ENCODE measurements at regions of chr1 and their contacts with region 1.

Region 1: DNA sequence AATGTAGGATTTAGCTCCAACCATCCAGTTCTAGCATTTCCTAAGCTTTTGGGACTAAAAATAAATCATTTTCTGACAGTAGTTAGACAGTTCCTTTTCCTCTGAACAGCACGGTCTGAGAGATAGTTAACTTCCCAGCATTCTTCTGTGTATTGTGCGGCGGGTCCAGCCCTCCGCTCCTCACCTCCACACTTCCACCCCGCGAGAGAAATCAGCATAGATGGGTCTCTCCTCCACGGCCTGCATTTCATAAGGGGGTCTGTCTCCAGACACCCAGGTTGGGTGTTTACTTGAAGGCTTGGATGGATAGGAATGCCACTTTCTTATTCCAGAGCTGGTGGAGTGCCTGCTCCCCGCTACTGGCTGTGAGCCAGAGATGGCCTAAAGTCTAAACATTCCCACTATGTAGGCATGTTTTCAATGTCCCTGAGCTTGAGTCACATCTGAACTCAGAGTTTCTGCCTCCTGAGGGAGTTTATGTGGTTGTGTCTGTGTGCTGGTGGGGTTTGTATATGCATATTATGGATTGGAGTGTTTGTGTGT is 38.0 kb upstream of the PPP2R5A start:
- DNase-seq: no peak
- H3K4me3 ChIP-seq: no peak overlapping the region
- H3K27ac ChIP-seq: no peak overlapping the region
- H3K4me1 ChIP-seq: peaks cover 0 to 8% (median 6%) of the 10 kb centered on the region in 4 donors
- H3K27me3 ChIP-seq: no peaks in the 10 kb centered on the region
- CTCF ChIP-seq: no peak
- EP300 ChIP-seq: no peak
- POLR2A ChIP-seq: no peak

Region 2: DNA sequence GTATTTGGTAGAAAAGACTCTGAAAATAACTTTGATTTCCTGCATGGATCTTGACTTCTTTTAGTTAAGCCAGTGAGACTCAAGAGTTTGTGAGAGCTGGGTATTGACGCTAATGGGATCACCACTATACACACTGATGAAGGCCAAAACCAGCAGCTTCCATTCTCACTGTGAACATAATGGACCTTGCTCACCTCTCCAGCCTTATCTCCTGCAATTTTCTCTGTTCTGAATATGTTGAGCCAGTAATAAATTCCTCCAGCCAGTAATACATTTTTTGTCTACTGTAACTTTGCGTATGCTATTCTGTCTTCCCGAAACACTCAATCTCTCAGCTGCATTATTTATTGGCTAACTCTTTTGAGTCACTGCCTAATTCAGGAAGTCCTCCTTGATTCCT is 73.7 kb before region 1 on chr1:
- in situ Hi-C with region 1: no loop called
- intact Hi-C with region 1: loop called (anchors 2 kb)
- DNase-seq: no peak
- H3K4me3 ChIP-seq: no peak overlapping the region
- H3K27ac ChIP-seq: no peak overlapping the region
- H3K4me1 ChIP-seq: no peaks in the 10 kb centered on the region
- H3K27me3 ChIP-seq: no peaks in the 10 kb centered on the region
- CTCF ChIP-seq: no peak
- EP300 ChIP-seq: no peak
- POLR2A ChIP-seq: no peak

Region 3: GRCh38 chr1:212539737-212540430 is 292.6 kb after region 1 on chr1:
- in situ Hi-C with region 1: no loop called
- intact Hi-C with region 1: no loop called
- DNase-seq: no peak
- H3K4me3 ChIP-seq: no peak overlapping the region
- H3K27ac ChIP-seq: no peak overlapping the region
- H3K4me1 ChIP-seq: no peaks in the 10 kb centered on the region
- H3K27me3 ChIP-seq: no peaks in the 10 kb centered on the region
- CTCF ChIP-seq: no peak
- EP300 ChIP-seq: no peak
- POLR2A ChIP-seq: no peak

Region 4: GRCh38 chr1:212791676-212792395 is 544.6 kb after region 1 on chr1 and contains the starts of genes NSL1 and TATDN3:
- in situ Hi-C with region 1: no loop called
- intact Hi-C with region 1: loop called (anchors 10 kb)
- DNase-seq: peak; percentile 94
- H3K4me3 ChIP-seq: peak within 1 kb of the TSS; percentile 72 to 93 (median 90)
- H3K27ac ChIP-seq: peak within 1 kb of the TSS; percentile 90 to 99 (median 96)
- H3K4me1 ChIP-seq: peaks cover 9 to 47% (median 22%) of the 10 kb centered on the region in 4 donors
- H3K27me3 ChIP-seq: no peaks in the 10 kb centered on the region
- CTCF ChIP-seq: no peak
- EP300 ChIP-seq: no peak
- POLR2A ChIP-seq: peak; percentile 89
- total RNA-seq, gene NSL1: 4.2 to 33.7 (median 28.4) TPM
- total RNA-seq, gene TATDN3: 1.00 to 17.0 (median 4.6) TPM

Measured in transverse colon (tissue), 4 donors.